SK-N-SH (cell line): ENCODE measurements at regions of chr1 and their contacts with region 1.

Region 1: DNA sequence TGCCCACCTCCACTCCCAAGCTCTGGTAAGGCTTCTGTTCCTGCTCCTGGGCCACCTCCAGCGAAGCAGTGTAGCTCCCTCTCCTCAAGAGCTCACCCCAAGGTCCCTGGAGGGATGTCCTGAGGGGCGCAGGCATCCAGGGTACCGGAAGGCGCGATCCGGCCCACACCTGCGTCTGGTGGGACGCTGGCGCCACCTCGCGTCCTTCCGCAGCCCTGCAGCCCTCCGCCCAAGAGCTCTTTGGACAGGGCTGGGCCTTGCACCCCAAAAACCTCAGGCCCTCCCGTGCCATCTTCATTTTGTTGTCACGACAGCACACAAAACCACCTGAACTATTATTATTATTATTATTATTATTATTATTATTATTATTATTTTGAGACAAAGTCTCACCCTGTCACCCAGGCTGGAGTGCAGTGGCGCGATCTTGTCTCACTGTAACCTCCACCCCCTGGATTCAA is 49.2 kb upstream of the PAX7 start:
- DNase-seq: peak; percentile 85
- H3K4me3 ChIP-seq: no peak overlapping the region; a peak in 1 of 4 replicates
- H3K27ac ChIP-seq: no peak overlapping the region
- H3K4me1 ChIP-seq: no peaks in the 10 kb centered on the region; a peak in 1 of 4 replicates
- H3K27me3 ChIP-seq: no peaks in the 10 kb centered on the region
- CTCF ChIP-seq: peak; percentile 65
- EP300 ChIP-seq: no peak
- RAD21 ChIP-seq: peak; percentile 84

Region 2: GRCh38 chr1:17653728-17654351 is 927.6 kb before region 1 on chr1:
- CTCF ChIA-PET with region 1: interaction called, 33 read pairs
- POLR2A ChIA-PET with region 1: no interaction called
- DNase-seq: peak; percentile 85
- H3K4me3 ChIP-seq: no peak overlapping the region; a peak in 1 of 4 replicates
- H3K27ac ChIP-seq: no peak overlapping the region
- H3K4me1 ChIP-seq: peaks cover 0 to 6% of the 10 kb centered on the region in 2 experiments; a peak in 1 of 4 replicates
- H3K27me3 ChIP-seq: no peaks in the 10 kb centered on the region
- CTCF ChIP-seq: peak; percentile 79
- EP300 ChIP-seq: no peak
- RAD21 ChIP-seq: peak; percentile 84

Region 3: GRCh38 chr1:18299441-18300338 is 281.8 kb before region 1 on chr1:
- CTCF ChIA-PET with region 1: interaction called, 30 read pairs
- POLR2A ChIA-PET with region 1: no interaction called
- DNase-seq: peak; percentile 73
- H3K4me3 ChIP-seq: no peak overlapping the region; a peak in 1 of 4 replicates
- H3K27ac ChIP-seq: no peak overlapping the region
- H3K4me1 ChIP-seq: peaks cover 0 to 4% of the 10 kb centered on the region in 2 experiments; a peak in 1 of 4 replicates
- H3K27me3 ChIP-seq: no peaks in the 10 kb centered on the region
- CTCF ChIP-seq: peak; percentile 41
- EP300 ChIP-seq: no peak
- RAD21 ChIP-seq: peak; percentile 58

Region 4: GRCh38 chr1:18446751-18447150 is 134.7 kb before region 1 on chr1:
- CTCF ChIA-PET with region 1: no interaction called
- POLR2A ChIA-PET with region 1: no interaction called
- DNase-seq: no peak
- H3K4me3 ChIP-seq: no peak overlapping the region
- H3K27ac ChIP-seq: no peak overlapping the region
- H3K4me1 ChIP-seq: no peaks in the 10 kb centered on the region
- H3K27me3 ChIP-seq: no peaks in the 10 kb centered on the region
- CTCF ChIP-seq: no peak
- EP300 ChIP-seq: no peak
- RAD21 ChIP-seq: no peak

Region 5: GRCh38 chr1:18532390-18533170 is 48.9 kb before region 1 on chr1:
- CTCF ChIA-PET with region 1: interaction called, 17 read pairs
- POLR2A ChIA-PET with region 1: no interaction called
- DNase-seq: no peak
- H3K4me3 ChIP-seq: no peak overlapping the region
- H3K27ac ChIP-seq: no peak overlapping the region
- H3K4me1 ChIP-seq: peaks cover 0 to 3% of the 10 kb centered on the region in 2 experiments; a peak in 1 of 4 replicates
- H3K27me3 ChIP-seq: no peaks in the 10 kb centered on the region
- CTCF ChIP-seq: no peak
- EP300 ChIP-seq: no peak
- RAD21 ChIP-seq: no peak

Region 6: GRCh38 chr1:18569811-18570545 is 11.5 kb before region 1 on chr1:
- CTCF ChIA-PET with region 1: interaction called, 69 read pairs
- POLR2A ChIA-PET with region 1: no interaction called
- DNase-seq: peak; percentile 32
- H3K4me3 ChIP-seq: no peak overlapping the region
- H3K27ac ChIP-seq: peak overlapping the region in 1 of 2 experiments; percentile 35; a peak in 2 of 4 replicates
- H3K4me1 ChIP-seq: peaks cover 0 to 15% of the 10 kb centered on the region in 2 experiments; a peak in 1 of 4 replicates
- H3K27me3 ChIP-seq: no peaks in the 10 kb centered on the region
- CTCF ChIP-seq: no peak
- EP300 ChIP-seq: peak in 1 of 2 experiments; percentile 2; a peak in 1 of 4 replicates
- RAD21 ChIP-seq: no peak

Region 7: DNA sequence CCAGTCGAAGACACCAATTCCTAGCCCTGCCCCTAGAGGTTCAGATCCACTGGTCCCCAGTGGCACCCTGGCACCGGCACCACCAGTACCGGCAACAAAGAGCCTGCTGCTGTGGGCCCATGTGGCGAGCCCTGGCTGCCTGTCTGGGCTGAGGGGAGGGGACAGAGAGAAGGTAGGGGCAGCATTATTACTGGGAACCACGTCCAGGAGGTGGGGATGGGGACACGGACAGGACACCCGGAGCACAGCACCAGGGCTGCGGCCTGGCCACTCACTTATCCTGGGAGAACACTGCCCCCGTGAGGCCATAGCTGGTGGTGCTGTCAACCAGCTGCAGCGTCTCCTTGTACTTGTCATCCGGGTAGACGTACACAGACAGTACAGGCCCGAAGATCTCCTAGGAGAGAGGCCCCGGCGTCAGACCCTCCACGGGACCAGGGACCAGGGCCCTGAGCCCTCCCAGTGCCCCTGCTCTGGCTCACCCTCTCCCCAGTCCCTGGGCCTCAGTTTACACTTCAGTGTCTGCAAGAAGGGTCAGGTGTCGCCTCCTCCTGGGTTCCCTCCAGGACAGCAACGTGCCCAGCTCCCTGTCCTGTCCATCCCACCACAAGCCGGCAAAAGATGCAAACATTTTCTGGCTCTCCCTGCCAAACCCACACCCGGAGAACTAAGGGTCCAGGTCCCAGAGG is 293.8 kb after region 1 on chr1:
- CTCF ChIA-PET with region 1: interaction called, 15 read pairs
- POLR2A ChIA-PET with region 1: no interaction called
- DNase-seq: peak; percentile 96
- H3K4me3 ChIP-seq: no peak overlapping the region; a peak in 1 of 4 replicates
- H3K27ac ChIP-seq: no peak overlapping the region
- H3K4me1 ChIP-seq: peaks cover 0 to 8% of the 10 kb centered on the region in 2 experiments; a peak in 1 of 4 replicates
- H3K27me3 ChIP-seq: no peaks in the 10 kb centered on the region
- CTCF ChIP-seq: peak; percentile 80
- EP300 ChIP-seq: no peak
- RAD21 ChIP-seq: peak; percentile 93